Transverse colon (tissue), 4 donors: ENCODE measurements at regions of chr5 and their contacts with region 1.

Region 1: DNA sequence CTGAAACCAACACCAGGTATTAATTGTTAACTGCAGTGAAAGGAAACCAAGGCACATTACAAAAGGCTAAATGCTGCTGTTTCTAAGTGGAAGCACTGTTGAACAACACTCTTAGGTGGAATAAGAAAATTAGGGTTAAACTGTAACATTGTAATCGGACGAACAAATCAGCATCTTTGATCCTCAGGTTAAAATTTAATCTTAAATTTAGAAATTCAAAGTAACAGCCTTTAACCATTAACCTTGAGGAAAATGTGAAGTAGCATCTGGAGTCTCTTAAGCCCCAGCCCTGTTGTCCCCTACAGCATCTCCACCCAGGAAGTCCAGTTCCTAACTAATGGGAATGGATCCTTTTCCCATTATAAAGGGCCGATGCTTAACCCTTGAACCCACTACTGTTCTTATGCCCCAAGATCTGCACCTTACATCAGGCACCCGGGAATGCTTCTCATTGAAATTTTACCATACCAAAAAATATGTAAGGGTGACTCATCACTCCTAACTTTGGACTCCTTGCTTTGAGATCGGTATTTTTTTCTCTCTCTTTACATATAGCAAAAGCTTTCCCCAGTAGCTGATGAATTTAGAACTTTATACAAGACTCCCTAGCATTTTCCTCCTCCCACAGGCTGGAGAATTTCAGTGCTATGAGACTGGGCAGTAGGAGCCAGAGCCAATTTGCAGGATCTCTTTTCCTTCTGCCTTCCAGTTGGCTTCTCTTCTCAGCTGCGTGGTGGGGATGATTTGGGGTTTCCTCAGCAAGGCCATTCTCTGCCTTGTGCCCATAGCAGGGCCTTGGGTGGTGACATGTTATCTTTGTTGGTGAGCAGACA is 32.0 kb upstream of the ITGA2 start:
- DNase-seq: no peak
- H3K4me3 ChIP-seq: no peak overlapping the region
- H3K27ac ChIP-seq: no peak overlapping the region
- H3K4me1 ChIP-seq: peaks cover 0 to 15% (median 0%) of the 10 kb centered on the region in 4 donors
- H3K27me3 ChIP-seq: no peaks in the 10 kb centered on the region
- CTCF ChIP-seq: no peak
- EP300 ChIP-seq: no peak
- POLR2A ChIP-seq: no peak

Region 2: GRCh38 chr5:53089345-53089991 is 132.3 kb after region 1 on chr5:
- in situ Hi-C with region 1: loop called in 1 of 4 experiments (anchors 10 kb)
- intact Hi-C with region 1: loop called (anchors 5 kb)
- DNase-seq: no peak
- H3K4me3 ChIP-seq: no peak overlapping the region
- H3K27ac ChIP-seq: no peak overlapping the region
- H3K4me1 ChIP-seq: no peaks in the 10 kb centered on the region
- H3K27me3 ChIP-seq: no peaks in the 10 kb centered on the region
- CTCF ChIP-seq: no peak
- EP300 ChIP-seq: no peak
- POLR2A ChIP-seq: no peak